ENCODE measurements at regions of chr6 and their contacts with region 1.

Region 1: DNA sequence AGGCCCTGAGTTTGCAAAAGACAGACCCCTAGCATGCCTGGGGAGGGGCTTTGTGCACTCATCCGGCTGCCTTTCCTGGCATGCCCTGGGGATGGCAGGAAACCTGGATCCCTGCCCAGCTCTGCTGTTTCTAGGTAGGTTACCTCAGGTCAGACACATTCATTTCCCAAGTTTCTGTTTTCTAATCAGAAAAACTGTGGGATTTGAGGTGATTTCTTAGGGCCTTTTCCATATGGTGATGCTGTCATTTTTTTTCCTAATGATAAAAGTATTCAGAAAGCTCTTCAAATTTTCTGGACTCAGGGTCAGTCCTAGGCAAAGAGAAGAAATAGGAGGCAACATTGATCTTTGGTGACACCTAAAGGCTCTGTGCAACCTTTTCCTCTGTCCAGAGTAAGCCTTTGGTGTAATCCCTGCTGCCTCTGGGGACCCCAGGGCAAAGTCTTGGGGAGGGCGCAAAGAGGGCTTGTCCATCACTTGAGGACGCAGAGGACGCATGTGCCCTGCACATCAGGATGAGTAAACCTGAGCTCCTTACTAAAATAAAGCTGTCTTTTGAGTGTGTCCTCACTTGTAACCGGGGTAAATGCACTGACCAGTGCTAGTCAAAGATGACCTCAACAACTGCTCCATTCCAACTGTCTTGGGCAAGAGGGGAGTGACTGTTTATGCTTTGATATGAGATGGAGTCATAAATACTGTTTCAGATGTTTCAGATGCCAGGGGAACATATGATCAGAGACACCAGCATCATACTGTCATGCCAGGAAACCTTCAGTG is 13.5 kb upstream of the TRAM2 start:
- DNase-seq: peak; percentile 69
- H3K4me3 ChIP-seq: no peak overlapping the region
- H3K27ac ChIP-seq: peak overlapping the region in 1 of 2 experiments; percentile 97; a peak in 2 of 4 replicates
- H3K4me1 ChIP-seq: peaks cover 26 to 66% of the 10 kb centered on the region in 2 experiments
- H3K27me3 ChIP-seq: no peaks in the 10 kb centered on the region
- CTCF ChIP-seq: peak; percentile 37
- EP300 ChIP-seq: peak in 1 of 2 experiments; percentile 80; a peak in 1 of 4 replicates
- RAD21 ChIP-seq: peak; percentile 48

Region 2: GRCh38 chr6:52605610-52606185 is 15.4 kb after region 1 on chr6:
- CTCF ChIA-PET with region 1: interaction called, 75 read pairs
- POLR2A ChIA-PET with region 1: interaction called, 3 read pairs
- DNase-seq: no peak
- H3K4me3 ChIP-seq: no peak overlapping the region
- H3K27ac ChIP-seq: no peak overlapping the region
- H3K4me1 ChIP-seq: peaks cover 16 to 25% of the 10 kb centered on the region in 2 experiments
- H3K27me3 ChIP-seq: no peaks in the 10 kb centered on the region
- CTCF ChIP-seq: no peak
- EP300 ChIP-seq: no peak
- RAD21 ChIP-seq: no peak

Measured in SK-N-SH (cell line).